PC-3 (cell line): ENCODE measurements at regions of chr3 and their contacts with region 1.

Region 1: DNA sequence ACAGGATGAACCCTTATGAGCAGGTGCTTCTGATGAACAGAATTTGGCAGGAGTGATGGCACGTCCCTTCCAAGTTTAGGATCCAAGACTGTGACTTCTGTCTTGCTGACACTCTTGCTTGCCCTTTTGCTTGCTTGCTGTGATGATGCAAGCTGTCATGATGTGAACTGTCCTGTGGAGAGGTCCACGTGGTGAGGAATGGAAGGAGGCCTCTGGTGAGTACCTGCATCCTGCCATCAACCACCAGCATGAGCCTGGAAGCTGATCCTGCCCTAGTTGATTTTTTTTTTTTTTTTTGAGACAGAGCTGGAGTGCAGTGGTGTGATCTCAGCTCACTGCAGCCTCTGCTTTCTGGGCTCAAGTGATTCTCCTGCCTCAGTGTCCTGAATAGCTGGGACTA is 45.5 kb downstream of the EDEM1 start:
- DNase-seq: no peak
- ATAC-seq: peak; percentile 3; the same call in 1 of the 2 replicates
- H3K4me3 ChIP-seq: no peak overlapping the region; the same call in 1 of the 2 replicates
- H3K27ac ChIP-seq: peak overlapping the region; percentile 97
- H3K4me1 ChIP-seq: peaks cover 22% of the 10 kb centered on the region
- H3K27me3 ChIP-seq: no peaks in the 10 kb centered on the region
- CTCF ChIP-seq: no peak

Region 2: GRCh38 chr3:5264896-5265770 is 32.1 kb after region 1 on chr3:
- CTCF ChIA-PET with region 1: no interaction called
- POLR2A ChIA-PET with region 1: no interaction called
- intact Hi-C with region 1: loop called (anchors 1 kb)
- DNase-seq: no peak
- ATAC-seq: no peak
- H3K4me3 ChIP-seq: no peak overlapping the region
- H3K27ac ChIP-seq: no peak overlapping the region
- H3K4me1 ChIP-seq: no peaks in the 10 kb centered on the region
- H3K27me3 ChIP-seq: 0 out of 2 replicates have a peak, but pooled peaks cover 8% of the 10 kb centered on the region
- CTCF ChIP-seq: no peak

Region 3: GRCh38 chr3:5304789-5305683 is 72.0 kb after region 1 on chr3:
- CTCF ChIA-PET with region 1: no interaction called
- POLR2A ChIA-PET with region 1: no interaction called
- intact Hi-C with region 1: no loop called
- DNase-seq: peak; percentile 84
- ATAC-seq: peak; percentile 85
- H3K4me3 ChIP-seq: no peak overlapping the region
- H3K27ac ChIP-seq: no peak overlapping the region
- H3K4me1 ChIP-seq: peaks cover 12% of the 10 kb centered on the region; the same call in 1 of the 2 replicates
- H3K27me3 ChIP-seq: no peaks in the 10 kb centered on the region
- CTCF ChIP-seq: peak; percentile 94